ENCODE measurements at regions of chr2 and their contacts with region 1.

Region 1: GRCh38 chr2:64686283-64686956 is 32.7 kb upstream of the SERTAD2 start:
- DNase-seq: peak; percentile 31
- ATAC-seq: no peak
- H3K4me3 ChIP-seq: no peak overlapping the region
- H3K27ac ChIP-seq: no peak overlapping the region; the same call in 1 of the 2 replicates
- H3K4me1 ChIP-seq: peaks cover 16% of the 10 kb centered on the region
- H3K27me3 ChIP-seq: no peaks in the 10 kb centered on the region
- CTCF ChIP-seq: no peak

Region 2: GRCh38 chr2:64666810-64667438 is 19.5 kb before region 1 on chr2:
- CTCF ChIA-PET with region 1: no interaction called
- POLR2A ChIA-PET with region 1: interaction called, 16 read pairs
- intact Hi-C with region 1: no loop called
- DNase-seq: no peak
- ATAC-seq: no peak
- H3K4me3 ChIP-seq: no peak overlapping the region
- H3K27ac ChIP-seq: no peak overlapping the region
- H3K4me1 ChIP-seq: peaks cover 6% of the 10 kb centered on the region
- H3K27me3 ChIP-seq: no peaks in the 10 kb centered on the region
- CTCF ChIP-seq: no peak